Transverse colon (tissue), 4 donors: ENCODE measurements at regions of chr17 and their contacts with region 1.

Region 1: DNA sequence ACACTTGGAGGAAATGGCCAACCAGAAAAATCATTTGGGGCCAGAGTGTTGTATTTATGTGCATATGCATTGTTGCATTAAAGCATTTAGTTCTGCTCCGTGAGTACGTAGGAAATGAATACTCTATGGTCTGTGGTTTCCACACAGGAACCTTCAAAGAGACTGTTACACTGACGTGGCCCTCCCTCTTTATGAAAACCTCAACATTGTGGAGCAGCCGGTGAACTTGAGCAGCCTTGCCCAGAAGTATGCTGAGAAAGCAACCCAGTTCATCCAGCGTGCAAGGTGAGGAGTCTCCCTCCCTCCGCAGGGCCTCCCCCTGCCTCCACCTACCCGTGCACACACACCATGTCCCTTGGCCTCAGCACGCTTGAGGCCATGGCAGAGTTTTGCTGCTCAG is 65.2 kb downstream of the ARSG start:
- DNase-seq: peak; percentile 37
- H3K4me3 ChIP-seq: no peak overlapping the region
- H3K27ac ChIP-seq: no peak overlapping the region
- H3K4me1 ChIP-seq: no peaks in the 10 kb centered on the region
- H3K27me3 ChIP-seq: no peaks in the 10 kb centered on the region
- CTCF ChIP-seq: no peak
- EP300 ChIP-seq: no peak
- POLR2A ChIP-seq: no peak

Region 2: GRCh38 chr17:68296211-68297191 is 60.0 kb before region 1 on chr17:
- in situ Hi-C with region 1: no loop called
- intact Hi-C with region 1: no loop called
- DNase-seq: peak; percentile 52
- H3K4me3 ChIP-seq: no peak overlapping the region
- H3K27ac ChIP-seq: peak overlapping the region in 2 of 4 donors; percentile 20 to 33
- H3K4me1 ChIP-seq: peaks cover 0 to 13% (median 10%) of the 10 kb centered on the region in 4 donors
- H3K27me3 ChIP-seq: peaks cover 50% of the 10 kb centered on the region
- CTCF ChIP-seq: no peak
- EP300 ChIP-seq: no peak
- POLR2A ChIP-seq: no peak

Region 3: DNA sequence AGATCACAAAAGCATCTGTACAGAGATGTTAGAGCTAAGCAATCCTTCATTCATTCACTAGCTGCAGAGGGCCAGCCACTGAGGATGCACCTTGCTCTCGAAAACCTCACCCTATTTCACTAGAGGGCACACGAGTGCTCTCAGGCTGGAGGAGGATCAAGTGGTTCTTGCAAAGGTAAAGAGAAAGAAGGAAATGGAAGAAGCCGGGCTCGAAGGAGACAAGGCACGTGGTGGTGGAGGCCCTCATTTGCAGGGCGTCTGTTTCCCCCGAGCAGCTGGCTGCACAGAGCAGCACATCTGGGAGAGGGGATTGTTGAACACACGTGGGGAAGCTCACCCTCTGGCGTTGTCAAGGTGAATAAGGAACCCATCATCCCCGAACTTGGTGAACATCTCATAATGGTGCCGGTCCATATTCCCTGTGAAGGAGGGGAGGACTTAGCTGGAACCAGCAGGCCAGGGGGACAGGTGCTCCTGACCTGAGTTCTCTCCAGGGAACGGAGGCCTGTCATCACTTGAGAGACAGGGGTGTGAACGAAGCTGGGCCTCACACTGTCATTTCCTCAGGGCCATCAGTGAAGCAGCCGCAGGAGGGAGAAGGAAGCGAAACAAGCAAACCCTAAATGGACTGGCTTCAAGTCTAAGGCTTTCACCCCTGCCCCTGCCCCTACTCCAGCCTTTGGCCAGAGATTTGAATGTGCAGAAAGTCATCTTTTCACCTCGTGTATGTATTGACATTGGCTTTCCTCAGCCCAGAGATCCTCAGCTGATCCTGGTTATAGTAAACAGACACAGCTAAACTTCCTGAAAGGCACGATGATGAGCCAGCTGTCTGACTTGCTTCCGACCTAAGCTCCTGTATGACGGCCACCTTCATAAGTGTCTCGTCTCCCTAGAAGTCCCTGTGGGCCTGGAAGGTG is 183.3 kb after region 1 on chr17:
- in situ Hi-C with region 1: no loop called
- intact Hi-C with region 1: no loop called
- DNase-seq: no peak
- H3K4me3 ChIP-seq: no peak overlapping the region
- H3K27ac ChIP-seq: no peak overlapping the region
- H3K4me1 ChIP-seq: no peaks in the 10 kb centered on the region
- H3K27me3 ChIP-seq: no peaks in the 10 kb centered on the region
- CTCF ChIP-seq: no peak
- EP300 ChIP-seq: no peak
- POLR2A ChIP-seq: no peak

Region 4: GRCh38 chr17:70239391-70239826 is 1882.9 kb after region 1 on chr17:
- in situ Hi-C with region 1: no loop called
- intact Hi-C with region 1: loop called (anchors 5 kb)
- DNase-seq: no peak
- H3K4me3 ChIP-seq: no peak overlapping the region
- H3K27ac ChIP-seq: no peak overlapping the region
- H3K4me1 ChIP-seq: peaks cover 0 to 25% (median 5%) of the 10 kb centered on the region in 4 donors
- H3K27me3 ChIP-seq: no peaks in the 10 kb centered on the region
- CTCF ChIP-seq: no peak
- EP300 ChIP-seq: no peak
- POLR2A ChIP-seq: no peak